ENCODE measurements at regions of chr1 and their contacts with region 1.

Region 1: DNA sequence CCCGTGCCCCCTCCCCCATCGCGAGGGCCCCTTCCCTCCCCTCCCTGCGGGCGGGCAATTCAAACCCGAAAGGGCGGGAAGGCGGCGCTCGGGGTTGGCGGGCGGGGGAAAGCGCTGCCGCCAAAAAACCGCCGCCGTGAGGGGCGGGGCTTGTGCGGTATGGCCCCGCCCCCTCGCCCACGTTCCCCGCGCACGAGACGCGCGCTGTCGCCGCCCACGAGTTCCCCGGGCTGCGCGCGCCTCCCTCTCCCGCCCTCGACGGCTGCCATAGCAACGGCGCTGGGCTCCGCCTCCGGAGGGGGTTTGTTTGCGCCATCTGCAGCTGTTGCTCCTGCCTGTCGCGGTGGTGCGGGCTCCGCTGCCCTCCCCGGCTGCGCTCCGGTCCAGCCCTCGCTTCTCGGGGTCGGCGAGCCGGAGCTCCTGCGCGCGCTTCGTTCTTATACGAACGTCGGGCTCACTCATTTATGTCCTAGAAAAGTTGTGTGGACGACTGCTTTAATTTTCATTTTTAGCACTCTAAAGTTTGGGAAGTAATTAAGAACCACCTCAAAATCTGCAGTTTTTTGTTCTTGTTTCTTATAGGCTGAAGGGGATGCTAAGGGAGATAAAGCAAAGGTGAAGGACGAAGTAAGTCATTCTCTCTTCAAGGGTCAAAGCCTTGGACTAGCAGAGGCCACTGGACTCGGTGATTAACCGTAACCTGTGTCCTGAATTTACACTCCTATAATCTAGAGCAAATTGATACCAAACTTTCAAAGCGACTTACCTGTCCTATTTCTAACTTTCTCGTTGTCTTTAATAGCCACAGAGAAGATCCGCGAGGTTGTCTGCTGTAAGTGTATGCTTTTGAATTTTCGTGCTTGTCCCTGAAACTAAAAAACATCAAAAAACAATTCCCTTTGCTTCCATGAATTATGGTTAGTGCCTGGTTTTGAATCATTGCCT is 933 bp downstream of the HMGN2 start:
- DNase-seq: peak; percentile 95
- ATAC-seq: peak; percentile 89 to 93

Region 2: GRCh38 chr1:26431979-26432695 is 41.0 kb before region 1 on chr1 and contains the start of gene DHDDS:
- intact Hi-C with region 1: no loop called
- DNase-seq: peak; percentile 98
- ATAC-seq: peak; percentile 100
- total RNA-seq, gene DHDDS: 44.7 to 49.6 TPM

Region 3: GRCh38 chr1:26500488-26501175 is 27.5 kb after region 1 on chr1:
- intact Hi-C with region 1: loop called in 1 of 2 experiments (anchors 2 kb)
- DNase-seq: peak; percentile 69
- ATAC-seq: peak; percentile 95

Region 4: DNA sequence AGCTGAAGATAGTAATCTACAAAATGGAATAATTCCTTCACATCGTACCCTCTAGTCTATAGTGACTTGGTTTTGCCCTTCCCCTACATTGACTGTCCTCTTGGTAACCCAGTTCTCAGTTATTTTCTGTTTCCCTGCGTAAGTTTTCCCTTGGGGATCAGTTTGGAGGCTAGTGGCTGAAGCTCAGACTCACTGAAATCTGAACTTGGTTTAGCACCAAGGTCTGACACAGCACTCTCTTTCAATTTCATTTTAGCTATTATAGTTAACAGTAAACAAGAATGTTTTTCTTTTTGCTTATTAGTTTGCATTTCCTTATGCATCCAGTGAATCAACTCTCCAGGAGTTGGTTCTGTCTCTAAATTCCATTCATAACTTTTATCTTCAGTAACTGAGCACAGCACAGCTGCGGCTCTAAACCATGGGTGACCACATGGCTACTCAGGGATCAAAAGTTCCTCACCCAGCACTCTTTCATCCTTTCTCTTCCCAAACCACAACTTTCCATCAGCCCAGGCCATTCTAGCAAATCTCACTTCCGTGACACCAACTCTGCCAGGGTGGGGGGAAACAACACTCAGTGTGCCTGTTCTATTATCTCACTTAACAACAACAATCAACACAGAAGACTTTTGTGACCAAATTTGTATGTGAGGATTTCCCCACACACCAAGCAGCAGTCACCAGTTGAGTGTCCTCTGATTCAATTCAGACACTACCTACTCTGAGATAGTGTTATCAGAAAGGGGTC is 1216.4 kb after region 1 on chr1:
- intact Hi-C with region 1: no loop called
- DNase-seq: no peak
- ATAC-seq: peak; percentile 35 to 73